ENCODE measurements at regions of chr12 and their contacts with region 1.

Region 1: DNA sequence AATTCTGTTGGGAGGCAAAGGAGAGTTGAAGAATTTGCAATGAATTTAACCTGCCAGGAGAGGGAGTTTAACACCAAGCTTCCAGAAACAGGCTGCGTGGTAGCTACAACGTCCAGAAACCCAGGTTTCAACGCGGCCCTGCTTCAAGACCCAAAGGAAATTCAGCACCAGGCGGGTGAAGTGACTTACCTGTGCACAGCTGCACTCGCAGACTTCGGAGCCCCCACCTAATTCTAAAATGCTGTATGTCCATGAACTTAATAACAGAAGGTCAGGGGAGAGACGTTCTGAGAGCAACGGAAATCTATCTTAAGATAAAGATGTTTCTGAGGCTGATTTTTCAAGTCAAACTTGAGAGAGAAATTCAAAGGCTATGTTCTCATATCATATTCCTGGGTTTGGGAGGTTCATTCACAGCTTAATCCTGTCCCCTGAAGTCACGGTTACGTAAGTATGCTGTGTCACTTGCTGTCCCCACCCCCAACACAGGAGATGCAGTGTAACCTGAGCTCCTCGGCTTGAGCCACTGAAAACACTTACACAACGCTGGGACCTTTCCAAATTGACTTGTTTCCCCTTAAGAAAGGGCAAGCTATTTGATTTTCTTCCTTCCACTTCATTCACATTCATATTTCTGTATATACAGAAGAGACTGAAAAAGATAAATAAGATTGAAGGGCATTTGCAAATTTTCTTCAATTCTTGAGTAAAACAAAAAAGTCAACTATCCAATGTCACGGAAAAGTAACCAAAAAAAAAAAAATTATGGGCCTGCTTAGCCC is 22.7 kb downstream of the CLIP1 start:
- DNase-seq: peak; percentile 67
- ATAC-seq: peak; percentile 83
- H3K4me3 Mint-ChIP-seq: no peak overlapping the region
- H3K27ac Mint-ChIP-seq: peak overlapping the region; percentile 44
- H3K4me1 Mint-ChIP-seq: peaks cover 31% of the 10 kb centered on the region
- H3K27me3 Mint-ChIP-seq: no peaks in the 10 kb centered on the region

Region 2: GRCh38 chr12:121789800-121790748 is 609.7 kb before region 1 on chr12:
- CTCF ChIA-PET with region 1: no interaction called
- POLR2A ChIA-PET with region 1: no interaction called
- DNase-seq: peak; percentile 98
- ATAC-seq: peak; percentile 60
- H3K4me3 Mint-ChIP-seq: peak overlapping the region; percentile 94
- H3K27ac Mint-ChIP-seq: peak overlapping the region; percentile 99
- H3K4me1 Mint-ChIP-seq: peaks cover 68% of the 10 kb centered on the region
- H3K27me3 Mint-ChIP-seq: no peaks in the 10 kb centered on the region

Region 3: DNA sequence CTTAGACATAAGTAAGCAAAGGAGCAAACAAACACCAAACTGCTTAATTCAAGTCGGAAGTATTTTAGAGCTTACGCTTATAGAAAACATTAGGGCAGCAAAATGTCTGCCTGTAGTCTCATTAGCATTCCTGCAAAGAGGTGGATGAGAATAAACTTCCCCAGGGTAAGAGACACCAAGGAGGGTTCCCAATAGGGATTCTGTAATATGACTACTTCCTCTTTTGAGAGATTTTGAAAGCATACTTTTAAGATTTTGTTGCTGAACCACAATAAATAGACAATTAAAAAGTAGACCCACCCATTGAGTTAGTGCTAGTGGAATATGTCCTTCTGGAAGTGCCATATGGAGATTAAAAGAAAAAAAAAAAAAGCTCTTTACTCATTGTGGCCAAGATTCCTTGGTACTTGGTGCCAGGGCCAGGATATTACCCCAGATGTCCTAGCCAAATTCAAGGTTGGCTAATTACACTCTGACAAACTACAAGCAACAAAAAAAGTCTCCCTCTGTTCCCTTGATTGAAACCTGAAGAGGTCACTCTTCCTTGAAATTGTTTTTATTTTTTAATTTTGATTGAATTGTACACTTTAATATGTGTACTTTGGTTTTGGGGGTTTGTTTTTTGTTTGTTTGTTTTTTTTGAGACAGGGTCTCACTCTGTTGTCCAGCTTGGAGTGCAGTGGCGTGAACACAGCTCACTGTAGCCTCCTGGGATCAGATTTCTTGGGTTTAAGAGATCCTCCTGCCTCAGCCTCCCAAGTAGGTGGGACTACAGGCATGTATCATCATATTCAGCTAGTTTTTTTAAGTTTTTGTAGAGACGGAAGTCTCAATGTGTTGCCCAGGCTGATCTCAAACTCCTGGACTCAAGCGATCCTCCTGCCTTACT is 14.0 kb after region 1 on chr12:
- CTCF ChIA-PET with region 1: interaction called, 10 read pairs
- POLR2A ChIA-PET with region 1: interaction called, 3 read pairs
- DNase-seq: no peak
- ATAC-seq: no peak
- H3K4me3 Mint-ChIP-seq: no peak overlapping the region
- H3K27ac Mint-ChIP-seq: no peak overlapping the region
- H3K4me1 Mint-ChIP-seq: peaks cover 23% of the 10 kb centered on the region
- H3K27me3 Mint-ChIP-seq: no peaks in the 10 kb centered on the region

Region 4: GRCh38 chr12:122427412-122427811 is 27.6 kb after region 1 on chr12:
- CTCF ChIA-PET with region 1: interaction called, 26 read pairs
- POLR2A ChIA-PET with region 1: interaction called, 5 read pairs
- DNase-seq: no peak
- ATAC-seq: no peak
- H3K4me3 Mint-ChIP-seq: no peak overlapping the region
- H3K27ac Mint-ChIP-seq: no peak overlapping the region
- H3K4me1 Mint-ChIP-seq: peaks cover 13% of the 10 kb centered on the region
- H3K27me3 Mint-ChIP-seq: peaks cover 3% of the 10 kb centered on the region

Region 5: DNA sequence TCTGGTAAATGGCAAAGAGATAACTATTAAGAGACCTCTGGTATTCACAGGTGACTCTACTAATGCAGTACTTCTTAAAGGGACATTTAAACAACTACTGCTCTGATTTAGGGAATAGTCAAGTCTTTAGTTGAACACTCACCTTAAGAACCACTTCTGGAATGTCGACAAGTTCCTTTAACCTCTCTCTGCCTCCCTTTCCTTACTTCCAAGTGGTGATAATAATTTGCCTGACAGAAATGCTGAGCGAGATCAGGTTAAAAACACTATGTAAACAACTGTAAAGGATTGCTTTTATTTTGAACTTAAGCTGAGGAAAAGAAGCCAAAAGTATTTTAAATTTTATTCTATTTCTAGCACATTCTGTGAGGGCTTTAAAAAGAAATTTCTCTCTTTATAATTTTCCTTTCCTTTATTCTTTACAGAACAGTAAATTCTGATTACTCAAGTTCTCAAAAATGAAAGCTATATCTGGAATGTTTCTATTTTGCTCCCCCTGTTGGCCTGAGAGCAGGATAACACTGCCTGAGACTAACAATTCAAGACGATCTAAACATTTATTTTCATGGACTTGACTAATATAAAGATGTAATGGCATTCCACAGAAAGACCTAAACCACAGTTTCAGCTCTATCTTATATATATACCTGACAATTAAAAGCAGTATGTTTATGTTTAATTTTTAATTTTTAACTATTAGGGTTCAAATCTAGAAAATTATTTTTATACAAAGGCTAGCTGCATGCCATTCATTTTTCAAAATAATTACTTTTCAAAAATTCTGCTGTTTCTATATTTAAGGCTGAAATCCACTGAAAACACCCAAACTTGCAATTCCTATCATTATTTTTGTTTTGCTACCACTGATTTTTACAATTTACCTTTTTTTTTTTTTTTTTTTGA is 71.8 kb after region 1 on chr12:
- CTCF ChIA-PET with region 1: interaction called, 253 read pairs
- POLR2A ChIA-PET with region 1: interaction called, 6 read pairs
- DNase-seq: no peak
- ATAC-seq: peak; percentile 56
- H3K4me3 Mint-ChIP-seq: no peak overlapping the region
- H3K27ac Mint-ChIP-seq: no peak overlapping the region
- H3K4me1 Mint-ChIP-seq: peaks cover 23% of the 10 kb centered on the region
- H3K27me3 Mint-ChIP-seq: no peaks in the 10 kb centered on the region